AG04450 (cell line): ENCODE measurements at regions of chr15 and their contacts with region 1.

Region 1: GRCh38 chr15:36911322-36911944 is 188.9 kb downstream of the MEIS2 start:
- DNase-seq: peak; percentile 29
- H3K4me3 ChIP-seq: no peak overlapping the region
- H3K27ac ChIP-seq: no peak overlapping the region
- H3K27me3 ChIP-seq: no peaks in the 10 kb centered on the region
- CTCF ChIP-seq: no peak

Region 2: GRCh38 chr15:36449084-36449661 is 462.3 kb before region 1 on chr15:
- CTCF ChIA-PET with region 1: no interaction called
- POLR2A ChIA-PET with region 1: no interaction called
- DNase-seq: no peak
- H3K4me3 ChIP-seq: no peak overlapping the region
- H3K27ac ChIP-seq: no peak overlapping the region
- H3K27me3 ChIP-seq: no peaks in the 10 kb centered on the region
- CTCF ChIP-seq: 0 out of 2 replicates have a peak, but pooled peaks have one; percentile 6

Region 3: DNA sequence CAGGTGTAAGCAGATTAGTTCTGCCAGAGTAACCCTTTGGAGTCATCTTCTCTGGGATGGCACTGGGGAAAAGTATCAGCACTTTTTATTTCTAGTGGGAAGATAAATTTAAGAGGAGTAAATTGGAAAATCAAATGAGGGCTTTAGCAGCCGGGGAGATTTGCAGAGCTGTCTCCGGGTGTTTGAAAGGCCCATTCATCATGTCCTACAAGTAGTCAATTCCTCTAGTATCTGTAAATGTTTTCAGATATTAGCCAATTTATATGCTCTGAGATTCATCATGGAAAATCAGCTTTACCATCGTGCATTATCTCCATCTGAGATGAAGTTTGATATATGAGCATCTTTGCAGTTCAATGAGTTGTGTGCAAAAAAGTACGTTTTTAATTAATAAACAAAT is 238.4 kb before region 1 on chr15:
- CTCF ChIA-PET with region 1: no interaction called
- POLR2A ChIA-PET with region 1: interaction called, 10 read pairs
- DNase-seq: no peak
- H3K4me3 ChIP-seq: no peak overlapping the region
- H3K27ac ChIP-seq: no peak overlapping the region
- H3K27me3 ChIP-seq: no peaks in the 10 kb centered on the region
- CTCF ChIP-seq: no peak